Activated CD4-positive, alpha-beta T cell treated with anti-CD3 and anti-CD28 coated beads, Interleukin-2, amount 10 ng/mL, durations not matched to agents 24 days and 14 days (primary cell): ENCODE measurements at regions of chr1 and their contacts with region 1.

Region 1: GRCh38 chr1:9784508-9785133 is 39.1 kb downstream of the CLSTN1 start:
- DNase-seq: peak; percentile 90
- H3K4me3 Mint-ChIP-seq: no peak overlapping the region
- H3K27ac Mint-ChIP-seq: no peak overlapping the region
- H3K4me1 Mint-ChIP-seq: peaks cover 28% of the 10 kb centered on the region
- H3K27me3 Mint-ChIP-seq: no peaks in the 10 kb centered on the region

Region 2: GRCh38 chr1:9101510-9102146 is 683.0 kb before region 1 on chr1:
- intact Hi-C with region 1: no loop called
- DNase-seq: peak; percentile 82
- H3K4me3 Mint-ChIP-seq: no peak overlapping the region
- H3K27ac Mint-ChIP-seq: no peak overlapping the region
- H3K4me1 Mint-ChIP-seq: no peaks in the 10 kb centered on the region
- H3K27me3 Mint-ChIP-seq: no peaks in the 10 kb centered on the region

Region 3: GRCh38 chr1:9503001-9503675 is 281.5 kb before region 1 on chr1:
- intact Hi-C with region 1: no loop called
- DNase-seq: no peak
- H3K4me3 Mint-ChIP-seq: no peak overlapping the region
- H3K27ac Mint-ChIP-seq: no peak overlapping the region
- H3K4me1 Mint-ChIP-seq: no peaks in the 10 kb centered on the region
- H3K27me3 Mint-ChIP-seq: peaks cover 9% of the 10 kb centered on the region

Region 4: DNA sequence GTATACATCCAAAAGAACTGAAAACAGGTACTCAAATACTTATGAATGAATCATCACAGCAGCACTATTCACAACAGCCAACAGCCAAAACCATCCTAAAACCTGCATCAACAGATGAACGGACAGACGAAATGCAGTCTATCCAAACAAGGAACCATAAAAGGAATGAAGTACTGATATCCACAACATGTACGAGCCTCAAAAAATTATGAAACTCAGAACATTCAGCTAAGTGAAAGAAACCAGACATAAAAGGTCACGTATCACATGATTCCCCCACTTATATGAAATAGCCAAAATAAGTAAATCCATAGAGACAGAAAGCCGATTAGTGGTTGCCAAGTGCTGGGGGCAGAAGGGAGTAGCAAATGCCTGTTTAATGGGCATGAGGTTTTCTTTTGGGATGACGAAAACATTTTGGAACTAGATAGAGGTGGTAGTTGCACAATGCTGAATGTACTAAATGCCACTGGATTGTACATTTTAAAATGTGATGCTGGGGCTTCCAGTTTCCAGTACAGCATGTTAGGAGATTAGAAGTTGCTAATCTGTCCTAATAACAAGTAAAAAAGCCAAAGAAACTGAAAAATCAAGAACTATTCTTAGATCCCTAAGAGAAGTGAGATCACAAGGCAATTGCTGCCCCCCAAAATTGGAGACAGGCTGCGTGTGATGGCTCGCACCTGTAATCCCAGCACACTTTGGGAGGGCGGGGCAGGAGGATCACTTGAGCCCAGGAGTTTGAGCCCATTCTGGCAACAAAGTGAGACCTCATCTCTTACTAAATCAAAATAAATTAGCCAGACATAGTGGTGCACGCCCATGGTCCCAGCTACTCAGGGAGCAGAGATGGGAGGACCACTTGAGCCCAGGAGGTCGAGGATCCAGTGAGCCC is 13.9 kb after region 1 on chr1:
- intact Hi-C with region 1: loop called (anchors 1 kb)
- DNase-seq: no peak
- H3K4me3 Mint-ChIP-seq: peak overlapping the region; percentile 41
- H3K27ac Mint-ChIP-seq: peak overlapping the region; percentile 48
- H3K4me1 Mint-ChIP-seq: peaks cover 47% of the 10 kb centered on the region
- H3K27me3 Mint-ChIP-seq: no peaks in the 10 kb centered on the region

Region 5: GRCh38 chr1:9867408-9868243 is 83.0 kb after region 1 on chr1:
- intact Hi-C with region 1: loop called (anchors 1 kb)
- DNase-seq: peak; percentile 96
- H3K4me3 Mint-ChIP-seq: no peak overlapping the region
- H3K27ac Mint-ChIP-seq: no peak overlapping the region
- H3K4me1 Mint-ChIP-seq: peaks cover 4% of the 10 kb centered on the region
- H3K27me3 Mint-ChIP-seq: peaks cover 2% of the 10 kb centered on the region